MCF 10A (cell line): ENCODE measurements at regions of chr2 and their contacts with region 1.

Region 1: GRCh38 chr2:67397143-67397986 is at the start of gene ETAA1:
- DNase-seq: peak; percentile 92
- H3K4me3 Mint-ChIP-seq: peak within 1 kb of the TSS; percentile 91
- H3K27ac Mint-ChIP-seq: peak within 1 kb of the TSS; percentile 92
- H3K4me1 Mint-ChIP-seq: peaks cover 36% of the 10 kb centered on the region
- H3K27me3 Mint-ChIP-seq: no peaks in the 10 kb centered on the region
- CTCF ChIP-seq: no peak
- total RNA-seq, gene ETAA1: 10.4 and 11.7 TPM in 2 replicates

Region 2: GRCh38 chr2:66080127-66080526 is 1317.2 kb before region 1 on chr2:
- CTCF ChIA-PET with region 1: no interaction called
- POLR2A ChIA-PET with region 1: no interaction called
- intact Hi-C with region 1: no loop called
- DNase-seq: no peak
- H3K4me3 Mint-ChIP-seq: no peak overlapping the region
- H3K27ac Mint-ChIP-seq: no peak overlapping the region
- H3K4me1 Mint-ChIP-seq: no peaks in the 10 kb centered on the region
- H3K27me3 Mint-ChIP-seq: peaks cover 21% of the 10 kb centered on the region
- CTCF ChIP-seq: no peak

Region 3: DNA sequence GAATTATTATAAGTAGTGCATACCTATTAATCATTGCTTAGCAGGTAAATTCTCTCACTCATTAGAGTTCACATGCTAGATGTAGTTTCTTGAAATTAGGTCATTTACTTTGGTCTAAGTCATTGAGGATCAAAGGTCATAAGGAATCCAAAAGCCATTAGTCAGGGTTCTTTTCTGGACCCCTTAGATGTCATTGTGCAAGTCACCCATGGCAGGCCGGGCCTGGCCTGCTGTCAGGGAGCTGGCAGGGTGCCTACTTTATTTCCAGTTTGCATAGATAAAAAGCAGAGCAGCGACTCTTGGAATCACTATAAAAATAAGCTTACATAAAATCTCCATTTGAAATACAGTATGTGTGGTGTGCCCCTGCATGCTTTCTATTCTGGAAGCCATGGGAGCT is 871.2 kb before region 1 on chr2:
- CTCF ChIA-PET with region 1: no interaction called
- POLR2A ChIA-PET with region 1: no interaction called
- intact Hi-C with region 1: no loop called
- DNase-seq: no peak
- H3K4me3 Mint-ChIP-seq: no peak overlapping the region
- H3K27ac Mint-ChIP-seq: no peak overlapping the region
- H3K4me1 Mint-ChIP-seq: no peaks in the 10 kb centered on the region
- H3K27me3 Mint-ChIP-seq: no peaks in the 10 kb centered on the region
- CTCF ChIP-seq: no peak

Region 4: GRCh38 chr2:67290451-67291290 is 106.7 kb before region 1 on chr2:
- CTCF ChIA-PET with region 1: interaction called, 5 read pairs
- POLR2A ChIA-PET with region 1: no interaction called
- intact Hi-C with region 1: loop called (anchors 1 kb)
- DNase-seq: peak; percentile 74
- H3K4me3 Mint-ChIP-seq: no peak overlapping the region
- H3K27ac Mint-ChIP-seq: peak overlapping the region; percentile 89
- H3K4me1 Mint-ChIP-seq: peaks cover 16% of the 10 kb centered on the region
- H3K27me3 Mint-ChIP-seq: no peaks in the 10 kb centered on the region
- CTCF ChIP-seq: no peak

Region 5: GRCh38 chr2:67451086-67451832 is 53.9 kb after region 1 on chr2:
- CTCF ChIA-PET with region 1: interaction called, 4 read pairs
- POLR2A ChIA-PET with region 1: interaction called, 20 read pairs
- intact Hi-C with region 1: no loop called
- DNase-seq: peak; percentile 99
- H3K4me3 Mint-ChIP-seq: no peak overlapping the region
- H3K27ac Mint-ChIP-seq: peak overlapping the region; percentile 84
- H3K4me1 Mint-ChIP-seq: peaks cover 41% of the 10 kb centered on the region
- H3K27me3 Mint-ChIP-seq: no peaks in the 10 kb centered on the region
- CTCF ChIP-seq: no peak

Region 6: DNA sequence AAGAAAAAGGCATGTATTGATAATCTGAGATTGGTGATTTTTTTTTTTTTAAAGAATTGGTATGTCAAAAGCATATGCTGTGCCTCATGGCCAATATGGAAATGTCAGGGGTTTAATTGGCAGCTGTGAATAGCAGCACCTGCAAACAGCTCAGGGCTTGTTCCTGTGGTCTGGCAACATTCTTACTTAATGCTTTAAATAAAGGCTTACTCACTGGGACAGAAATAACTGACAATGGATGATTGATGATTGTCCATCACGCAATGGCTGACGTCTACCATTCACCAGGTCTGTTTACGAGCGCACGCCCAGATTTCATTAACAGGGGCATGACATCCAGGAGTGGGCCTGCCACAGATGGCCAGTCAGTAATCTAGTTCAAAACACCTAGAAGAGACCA is 66.4 kb after region 1 on chr2:
- CTCF ChIA-PET with region 1: interaction called, 3 read pairs
- POLR2A ChIA-PET with region 1: interaction called, 30 read pairs
- intact Hi-C with region 1: loop called (anchors 5 kb)
- DNase-seq: peak; percentile 97
- H3K4me3 Mint-ChIP-seq: peak overlapping the region; percentile 28
- H3K27ac Mint-ChIP-seq: peak overlapping the region; percentile 92
- H3K4me1 Mint-ChIP-seq: peaks cover 37% of the 10 kb centered on the region
- H3K27me3 Mint-ChIP-seq: no peaks in the 10 kb centered on the region
- CTCF ChIP-seq: no peak